ENCODE measurements at regions of chr16 and their contacts with region 1.

Region 1: GRCh38 chr16:15996432-15997109 is 47.2 kb downstream of the ABCC1 start:
- DNase-seq: no peak
- ATAC-seq: no peak
- H3K4me3 Mint-ChIP-seq: no peak overlapping the region
- H3K27ac Mint-ChIP-seq: peak overlapping the region; percentile 58
- H3K4me1 Mint-ChIP-seq: peaks cover 35% of the 10 kb centered on the region
- H3K27me3 Mint-ChIP-seq: no peaks in the 10 kb centered on the region

Region 2: GRCh38 chr16:15949210-15950160 is 47.1 kb before region 1 on chr16 and contains the start of gene ABCC1:
- CTCF ChIA-PET with region 1: no interaction called
- POLR2A ChIA-PET with region 1: interaction called, 16 read pairs
- intact Hi-C with region 1: no loop called
- DNase-seq: peak; percentile 73
- ATAC-seq: peak; percentile 69
- H3K4me3 Mint-ChIP-seq: peak within 1 kb of the TSS; percentile 95
- H3K27ac Mint-ChIP-seq: peak within 1 kb of the TSS; percentile 100
- H3K4me1 Mint-ChIP-seq: peaks cover 51% of the 10 kb centered on the region
- H3K27me3 Mint-ChIP-seq: no peaks in the 10 kb centered on the region
- total RNA-seq, gene ABCC1: 57.8 to 65.1 TPM

Measured in activated CD4-positive, alpha-beta T cell treated with anti-CD3 and anti-CD28 coated beads for 36 hours (primary cell).